Mammary epithelial cell (primary cell): ENCODE measurements at regions of chr4 and their contacts with region 1.

Region 1: DNA sequence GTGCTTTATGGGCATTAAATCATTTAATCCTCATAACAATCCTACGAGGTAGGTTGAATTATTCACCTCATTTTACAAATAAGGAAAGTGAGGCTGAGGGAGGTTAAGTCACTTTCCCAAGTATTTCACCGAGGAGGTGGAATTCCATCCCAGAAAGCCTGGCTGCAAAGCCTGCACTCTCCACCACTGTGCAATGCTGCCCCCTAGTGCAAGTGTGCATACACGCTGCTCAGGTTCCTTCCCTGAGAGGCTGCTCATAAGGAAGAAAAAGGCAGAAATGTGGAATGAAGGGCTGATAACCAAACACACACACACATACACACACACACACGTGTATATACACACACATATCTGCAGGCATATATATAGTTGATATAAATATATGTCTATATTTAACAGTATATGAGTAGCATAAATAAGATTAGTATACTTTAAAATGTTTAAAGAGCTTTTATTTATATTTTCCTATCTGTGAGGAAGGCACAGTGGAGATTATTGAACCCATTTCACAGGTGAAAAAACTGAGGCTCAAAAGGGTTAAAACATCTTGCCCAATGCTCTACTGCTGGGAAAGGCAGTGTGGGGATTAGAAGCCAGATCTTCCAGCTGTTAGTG is 714.5 kb upstream of the TENM3 start:
- DNase-seq: peak; percentile 43
- H3K4me3 ChIP-seq: no peak overlapping the region
- H3K27ac ChIP-seq: no peak overlapping the region
- H3K4me1 ChIP-seq: no peaks in the 10 kb centered on the region
- H3K27me3 ChIP-seq: peaks cover 3% of the 10 kb centered on the region
- CTCF ChIP-seq: peak; percentile 95 to 99

Region 2: GRCh38 chr4:181075140-181075539 is 453.5 kb before region 1 on chr4:
- CTCF ChIA-PET with region 1: no interaction called
- dilution Hi-C with region 1: no loop called
- in situ Hi-C with region 1: no loop called
- intact Hi-C with region 1: no loop called
- DNase-seq: no peak
- H3K4me3 ChIP-seq: no peak overlapping the region
- H3K27ac ChIP-seq: no peak overlapping the region
- H3K4me1 ChIP-seq: no peaks in the 10 kb centered on the region
- H3K27me3 ChIP-seq: no peaks in the 10 kb centered on the region
- CTCF ChIP-seq: no peak

Region 3: DNA sequence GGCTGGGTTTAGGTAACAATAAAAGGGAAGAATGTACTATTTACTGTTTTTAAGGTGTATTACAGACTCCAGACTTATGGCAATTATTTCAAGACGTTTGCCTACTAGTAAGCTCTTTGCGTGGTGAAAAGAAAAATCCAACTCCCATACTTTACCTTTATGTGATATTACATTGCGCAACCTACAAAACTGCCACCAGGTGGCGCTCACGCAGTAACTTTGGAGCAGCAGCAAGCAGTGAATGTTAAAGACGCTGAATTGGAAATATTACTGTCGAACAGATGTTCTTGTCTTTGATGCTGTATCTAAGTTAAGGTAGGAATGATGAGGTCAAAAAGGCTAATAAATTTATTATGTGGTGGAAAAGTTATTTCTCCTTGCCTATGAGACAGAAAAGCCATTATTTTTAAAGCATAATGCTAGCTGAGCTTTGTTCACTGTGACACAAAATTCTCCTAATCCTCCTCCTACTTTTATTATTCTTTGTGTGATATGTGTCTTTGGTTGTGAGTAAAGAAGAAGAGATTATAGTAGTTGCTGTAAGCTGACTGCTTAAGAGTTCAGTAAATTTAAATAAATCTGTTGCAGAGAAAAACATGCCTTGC is 385.3 kb before region 1 on chr4:
- CTCF ChIA-PET with region 1: interaction called, 6 read pairs
- dilution Hi-C with region 1: no loop called
- in situ Hi-C with region 1: loop called (anchors 10 kb)
- intact Hi-C with region 1: loop called (anchors 1 kb)
- DNase-seq: peak; percentile 50
- H3K4me3 ChIP-seq: no peak overlapping the region
- H3K27ac ChIP-seq: no peak overlapping the region
- H3K4me1 ChIP-seq: no peaks in the 10 kb centered on the region
- H3K27me3 ChIP-seq: no peaks in the 10 kb centered on the region
- CTCF ChIP-seq: peak; percentile 75 to 81

Region 4: DNA sequence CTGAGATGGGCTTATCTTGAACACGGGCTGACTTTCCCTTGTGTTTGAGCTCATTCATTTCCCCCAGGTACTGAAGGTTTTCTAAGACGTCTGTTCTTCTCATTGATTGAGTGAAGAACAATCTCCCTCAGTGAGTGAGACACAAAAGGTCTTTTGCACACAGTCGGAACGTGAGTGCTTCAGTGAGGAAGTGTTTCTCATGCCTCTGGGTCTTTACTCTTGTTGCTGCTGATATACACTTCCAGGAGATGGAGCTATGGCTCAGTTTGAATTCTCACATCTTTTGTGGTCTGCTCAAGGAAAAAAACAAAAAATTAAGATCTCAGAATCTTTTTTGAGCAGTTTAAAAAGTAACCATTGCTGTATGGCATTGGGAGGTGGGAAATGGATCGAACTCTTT is 267.4 kb before region 1 on chr4:
- CTCF ChIA-PET with region 1: no interaction called
- dilution Hi-C with region 1: no loop called
- in situ Hi-C with region 1: no loop called
- intact Hi-C with region 1: loop called (anchors 2 kb)
- DNase-seq: no peak
- H3K4me3 ChIP-seq: no peak overlapping the region
- H3K27ac ChIP-seq: no peak overlapping the region
- H3K4me1 ChIP-seq: no peaks in the 10 kb centered on the region
- H3K27me3 ChIP-seq: peaks cover 1% of the 10 kb centered on the region
- CTCF ChIP-seq: peak; percentile 9 to 44

Region 5: DNA sequence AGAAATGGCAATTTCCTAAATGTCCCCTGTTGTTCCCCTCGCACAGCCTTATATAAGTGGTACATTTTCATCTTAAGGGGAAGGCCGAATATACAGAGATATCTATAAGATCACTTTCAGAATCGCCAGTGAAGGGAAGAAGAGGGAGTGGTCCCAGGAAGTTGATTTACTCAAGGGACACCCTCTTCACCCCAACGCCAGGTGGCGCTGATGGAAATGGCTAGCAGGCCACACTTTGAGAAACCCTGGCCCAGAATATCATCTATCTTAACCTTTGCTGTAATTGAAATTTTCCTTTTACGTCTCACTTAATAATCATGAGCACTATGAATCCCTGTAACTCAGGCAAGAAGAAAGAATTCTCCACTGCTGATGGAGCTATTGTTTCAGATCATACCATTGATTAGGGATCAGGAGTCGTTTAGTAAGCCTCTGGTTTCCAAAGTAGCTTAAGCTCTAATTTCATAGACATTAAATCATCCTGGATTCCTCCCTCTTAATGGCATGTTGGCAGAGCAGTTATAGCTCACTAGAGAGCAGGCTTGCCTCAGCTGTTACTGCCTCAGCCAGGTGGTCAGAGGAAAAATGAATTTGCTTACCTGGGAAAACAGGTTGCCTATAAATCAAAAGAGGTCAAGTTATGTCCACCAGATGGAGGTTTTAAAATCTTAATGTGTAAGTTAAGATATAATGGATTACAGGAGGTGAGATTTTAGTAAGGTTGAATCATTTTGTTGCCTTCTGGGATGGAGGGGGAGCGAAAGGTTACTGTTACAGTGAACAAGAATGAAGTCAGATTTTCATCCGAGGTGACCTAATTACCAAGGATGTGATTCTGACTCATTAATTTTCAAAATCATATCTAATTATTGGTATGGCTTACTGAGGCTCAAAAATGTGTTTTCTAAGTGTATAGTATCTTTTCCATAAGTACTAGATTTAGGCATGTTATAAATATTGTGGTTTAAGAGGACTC is 226.7 kb before region 1 on chr4:
- CTCF ChIA-PET with region 1: interaction called, 5 read pairs
- dilution Hi-C with region 1: no loop called
- in situ Hi-C with region 1: loop called in 1 of 2 experiments (anchors 10 kb)
- intact Hi-C with region 1: loop called (anchors 1 kb)
- DNase-seq: peak; percentile 24
- H3K4me3 ChIP-seq: no peak overlapping the region
- H3K27ac ChIP-seq: no peak overlapping the region
- H3K4me1 ChIP-seq: no peaks in the 10 kb centered on the region
- H3K27me3 ChIP-seq: no peaks in the 10 kb centered on the region
- CTCF ChIP-seq: peak; percentile 75 to 87

Region 6: GRCh38 chr4:181443021-181443420 is 85.7 kb before region 1 on chr4:
- CTCF ChIA-PET with region 1: no interaction called
- dilution Hi-C with region 1: no loop called
- in situ Hi-C with region 1: no loop called
- intact Hi-C with region 1: no loop called
- DNase-seq: no peak
- H3K4me3 ChIP-seq: no peak overlapping the region
- H3K27ac ChIP-seq: no peak overlapping the region
- H3K4me1 ChIP-seq: no peaks in the 10 kb centered on the region
- H3K27me3 ChIP-seq: peaks cover 5% of the 10 kb centered on the region
- CTCF ChIP-seq: no peak